Esophagus squamous epithelium (tissue), 5 donors: ENCODE measurements at regions of chr5 and their contacts with region 1.

Region 1: GRCh38 chr5:42583322-42583721 is 160.1 kb downstream of the GHR start:
- DNase-seq: no peak
- H3K4me3 ChIP-seq: no peak overlapping the region
- H3K27ac ChIP-seq: no peak overlapping the region
- H3K4me1 ChIP-seq: peaks cover 0 to 36% (median 12%) of the 10 kb centered on the region in 3 donors
- H3K27me3 ChIP-seq: no peaks in the 10 kb centered on the region
- CTCF ChIP-seq: peak; percentile 66 to 85 (median 77)
- POLR2A ChIP-seq: no peak

Region 2: GRCh38 chr5:42889311-42889933 is 306.1 kb after region 1 on chr5:
- intact Hi-C with region 1: loop called (anchors 10 kb)
- DNase-seq: peak; percentile 4
- H3K4me3 ChIP-seq: no peak overlapping the region
- H3K27ac ChIP-seq: no peak overlapping the region
- H3K4me1 ChIP-seq: peaks cover 0 to 17% (median 0%) of the 10 kb centered on the region in 3 donors
- H3K27me3 ChIP-seq: no peaks in the 10 kb centered on the region
- CTCF ChIP-seq: peak; percentile 62 to 89 (median 82)
- POLR2A ChIP-seq: no peak